Vagina (tissue), 2 donors: ENCODE measurements at regions of chr5 and their contacts with region 1.

Region 1: DNA sequence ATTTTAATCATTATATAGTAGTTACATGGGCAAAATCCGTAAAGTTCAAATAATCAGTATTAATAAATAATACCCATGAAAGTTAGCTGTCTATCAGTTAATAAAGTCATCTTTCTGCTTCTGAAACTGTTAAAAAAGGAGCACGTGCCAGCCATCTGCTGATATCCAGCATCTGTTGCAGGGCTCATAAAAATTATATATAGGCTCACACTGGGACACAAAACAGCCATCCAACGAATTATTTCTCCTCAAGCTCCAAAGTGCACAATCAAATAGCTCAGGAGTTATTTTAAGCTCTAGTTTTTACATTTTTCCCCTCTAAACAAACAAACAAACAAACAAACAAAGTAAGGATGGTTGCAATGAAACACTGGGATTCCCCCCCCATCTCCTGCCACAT is 48.3 kb downstream of the MRPS27 start:
- DNase-seq: no peak
- H3K4me3 ChIP-seq: no peak overlapping the region
- H3K27ac ChIP-seq: no peak overlapping the region
- H3K4me1 ChIP-seq: peaks cover 7% of the 10 kb centered on the region
- H3K27me3 ChIP-seq: no peaks in the 10 kb centered on the region
- CTCF ChIP-seq: no peak
- POLR2A ChIP-seq: no peak

Region 2: DNA sequence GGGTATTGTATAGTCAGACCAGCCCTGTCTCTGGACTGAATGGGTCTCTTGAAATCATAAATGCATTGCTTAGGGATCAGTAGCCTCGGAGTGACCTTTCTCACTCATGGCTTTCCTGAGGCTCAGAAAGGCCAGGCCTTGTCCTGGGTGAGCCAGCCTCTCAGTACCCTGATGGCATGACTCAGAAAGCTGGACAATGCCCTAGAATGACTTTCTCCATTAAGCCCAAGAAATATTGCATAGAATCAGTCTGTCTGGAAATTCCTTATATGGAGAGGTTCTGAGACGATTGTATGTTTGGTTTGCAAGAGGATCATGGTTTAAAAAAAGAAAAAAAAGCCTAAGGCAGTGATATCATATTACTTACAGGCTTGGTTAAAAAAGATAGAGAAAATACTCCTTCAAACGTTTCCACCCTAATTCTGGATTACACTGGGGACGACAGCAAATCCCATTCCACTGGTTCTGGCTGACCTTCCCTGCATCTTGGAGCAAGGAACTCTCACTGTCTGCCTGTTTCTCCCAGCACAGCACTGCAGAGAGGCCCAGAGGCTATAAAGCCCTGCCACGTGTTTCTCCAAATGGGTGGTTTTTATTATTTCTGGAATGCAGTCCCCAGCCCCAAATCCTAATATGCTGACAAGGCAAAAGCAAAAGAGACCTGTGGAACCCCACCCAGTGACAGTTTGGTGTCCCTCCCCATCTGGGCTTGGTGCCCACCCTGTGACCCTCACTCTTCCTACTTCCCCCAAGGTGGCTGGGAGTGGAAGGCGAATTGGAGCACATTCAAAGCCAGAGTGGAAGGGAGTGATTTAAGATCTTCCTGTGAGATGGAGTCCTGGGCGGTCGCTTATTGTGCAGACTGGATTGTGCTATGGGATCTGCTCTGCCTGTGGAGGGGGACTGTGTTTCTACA is 130.0 kb before region 1 on chr5:
- intact Hi-C with region 1: loop called (anchors 10 kb)
- DNase-seq: no peak
- H3K4me3 ChIP-seq: no peak overlapping the region
- H3K27ac ChIP-seq: peak overlapping the region; percentile 77
- H3K4me1 ChIP-seq: peaks cover 44% of the 10 kb centered on the region
- H3K27me3 ChIP-seq: no peaks in the 10 kb centered on the region
- CTCF ChIP-seq: no peak
- POLR2A ChIP-seq: no peak

Region 3: GRCh38 chr5:72818866-72819534 is 547.3 kb after region 1 on chr5:
- intact Hi-C with region 1: no loop called
- DNase-seq: no peak
- H3K4me3 ChIP-seq: peak overlapping the region in 1 of 2 donors; percentile 69
- H3K27ac ChIP-seq: no peak overlapping the region
- H3K4me1 ChIP-seq: peaks cover 31% of the 10 kb centered on the region
- H3K27me3 ChIP-seq: no peaks in the 10 kb centered on the region
- CTCF ChIP-seq: peak in 2 of 3 experiments; percentile 30 to 56
- POLR2A ChIP-seq: no peak